ENCODE measurements at regions of chr16 and their contacts with region 1.

Region 1: DNA sequence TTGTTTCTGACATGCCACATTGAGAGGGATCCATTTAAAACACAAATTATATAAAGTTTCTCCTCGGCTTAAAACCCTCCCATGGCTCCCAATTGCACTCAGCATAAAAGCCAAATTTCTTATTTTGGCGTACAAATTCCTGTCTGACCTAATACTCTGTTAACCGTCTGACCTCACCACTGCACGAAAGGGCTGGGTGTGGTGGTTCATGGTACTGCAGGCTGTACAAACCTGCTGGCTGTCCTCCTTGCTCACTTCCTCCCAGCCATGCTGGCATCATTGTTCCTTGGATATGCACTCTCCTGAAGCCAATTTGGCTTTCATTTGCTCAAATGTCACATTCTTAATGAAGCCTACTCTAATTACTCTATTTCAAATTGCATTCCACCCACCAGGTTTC is 301.6 kb upstream of the C16orf82 start:
- DNase-seq: no peak
- H3K4me3 ChIP-seq: no peak overlapping the region
- CTCF ChIP-seq: peak; percentile 37

Region 2: DNA sequence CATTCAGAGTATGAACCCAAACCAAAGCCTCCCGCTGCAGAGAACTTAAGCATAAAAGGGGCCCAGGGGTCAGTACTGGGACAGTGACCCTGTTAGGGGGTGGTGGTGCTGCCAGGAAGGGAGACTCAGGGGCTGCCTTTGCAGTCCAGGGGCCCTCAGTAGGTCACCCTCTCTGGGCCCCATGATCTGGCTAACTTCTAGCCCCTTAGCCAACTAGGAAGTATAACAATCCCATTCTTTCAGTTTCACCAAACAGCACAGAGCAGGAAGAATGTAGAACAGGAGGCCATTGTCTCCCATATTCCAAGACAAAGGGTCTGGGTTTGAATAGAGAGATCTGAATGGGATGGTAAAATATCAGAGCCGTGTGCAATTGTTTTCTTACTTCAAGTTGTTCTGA is 77.0 kb before region 1 on chr16:
- in situ Hi-C with region 1: no loop called
- DNase-seq: no peak
- H3K4me3 ChIP-seq: no peak overlapping the region
- CTCF ChIP-seq: no peak

Region 3: DNA sequence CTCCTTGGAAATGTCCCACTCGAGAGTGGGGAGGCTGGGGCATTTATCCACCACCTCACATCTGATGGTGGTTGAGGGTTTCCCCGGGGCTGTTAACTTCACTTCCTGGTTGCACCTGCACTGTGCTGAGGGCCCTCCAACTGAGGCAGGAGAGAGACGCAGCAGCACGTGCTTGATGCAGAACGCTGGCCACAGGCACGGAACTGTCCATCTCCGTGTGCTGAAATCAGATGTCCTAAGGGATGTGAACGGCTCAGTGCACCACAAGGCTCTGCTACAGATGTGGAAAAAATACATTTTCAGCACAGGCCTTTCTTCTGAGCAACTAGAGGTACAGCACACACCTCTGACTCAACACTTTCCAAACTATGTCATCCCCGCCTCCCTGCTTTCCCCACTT is 186.9 kb after region 1 on chr16:
- in situ Hi-C with region 1: loop called (anchors 10 kb)
- DNase-seq: no peak
- H3K4me3 ChIP-seq: no peak overlapping the region
- CTCF ChIP-seq: no peak

Region 4: GRCh38 chr16:27097800-27098230 is 332.7 kb after region 1 on chr16:
- in situ Hi-C with region 1: no loop called
- DNase-seq: peak; percentile 42
- H3K4me3 ChIP-seq: no peak overlapping the region
- CTCF ChIP-seq: no peak